CD8-positive, alpha-beta memory T cell (primary cell): ENCODE measurements at regions of chr19 and their contacts with region 1.

Region 1: DNA sequence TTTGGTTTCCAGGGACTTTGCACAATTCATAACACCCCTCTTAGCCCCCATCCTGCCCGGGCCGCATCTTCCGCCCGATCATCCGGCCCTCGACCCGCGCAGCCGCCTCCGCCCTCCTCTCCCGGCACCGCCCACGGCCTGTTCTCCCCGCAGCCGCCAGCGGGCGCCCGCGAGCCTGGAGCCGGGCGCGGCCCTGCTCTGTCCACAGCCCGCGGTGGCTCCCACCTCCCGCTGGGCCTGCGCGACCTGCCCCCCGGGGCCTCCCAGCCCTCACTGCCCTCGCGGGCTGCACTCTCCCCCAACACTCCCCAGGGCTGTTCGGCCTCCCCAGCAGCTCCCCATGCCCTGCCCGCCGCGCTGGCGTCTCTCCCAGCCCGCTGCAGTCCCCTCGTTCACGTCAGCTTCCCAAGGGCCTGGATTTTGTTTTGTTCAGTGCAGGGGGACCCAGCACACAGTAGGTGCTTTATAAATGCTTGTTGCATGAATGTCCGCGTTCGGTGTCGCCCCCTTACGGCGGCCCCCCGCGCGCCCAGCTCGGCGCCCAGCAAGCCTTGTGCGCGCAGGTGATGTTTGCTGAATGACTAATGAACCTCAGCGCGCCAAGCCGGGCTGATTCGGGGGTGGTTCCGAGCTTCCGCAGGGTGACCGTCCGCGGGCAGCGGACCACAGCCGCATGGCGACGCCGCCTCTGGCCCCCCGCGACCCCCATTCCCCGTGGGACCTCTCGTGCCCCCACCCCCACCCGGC is 4.6 kb upstream of the APC2 start:
- DNase-seq: peak; percentile 67 to 81 (median 76)
- H3K4me3 ChIP-seq: peak overlapping the region; percentile 43
- H3K4me3 Mint-ChIP-seq: peak overlapping the region; percentile 64 to 89 (median 71)
- H3K27ac ChIP-seq: no peak overlapping the region
- H3K27ac Mint-ChIP-seq: peak overlapping the region in 3 of 8 donors; percentile 27 to 67 (median 47)
- H3K4me1 ChIP-seq: peaks cover 18% of the 10 kb centered on the region
- H3K4me1 Mint-ChIP-seq: peaks cover 23 to 39% (median 26%) of the 10 kb centered on the region in 3 donors
- H3K27me3 ChIP-seq: peaks cover 33% of the 10 kb centered on the region
- H3K27me3 Mint-ChIP-seq: peaks cover 24 to 27% of the 10 kb centered on the region in 2 donors

Region 2: GRCh38 chr19:1470203-1471009 is 25.0 kb after region 1 on chr19:
- CTCF ChIA-PET with region 1: interaction called, 12 read pairs
- POLR2A ChIA-PET with region 1: interaction called, 5 read pairs
- DNase-seq: peak; percentile 52 to 79 (median 53)
- H3K4me3 ChIP-seq: peak overlapping the region; percentile 61
- H3K4me3 Mint-ChIP-seq: peak overlapping the region; percentile 57 to 87 (median 73)
- H3K27ac ChIP-seq: no peak overlapping the region
- H3K27ac Mint-ChIP-seq: peak overlapping the region in 1 of 8 donors; percentile 60
- H3K4me1 ChIP-seq: peaks cover 30% of the 10 kb centered on the region
- H3K4me1 Mint-ChIP-seq: peaks cover 5 to 25% (median 9%) of the 10 kb centered on the region in 3 donors
- H3K27me3 ChIP-seq: peaks cover 22% of the 10 kb centered on the region
- H3K27me3 Mint-ChIP-seq: peaks cover 0 to 2% of the 10 kb centered on the region in 2 donors